Dorsolateral prefrontal cortex (tissue), 120 donors: ENCODE measurements at regions of chr1 and their contacts with region 1.

Region 1: GRCh38 chr1:150186789-150187559 is 37.3 kb downstream of the PLEKHO1 start:
- DNase-seq: no peak
- H3K4me3 ChIP-seq: peak overlapping the region in 35 of 59 donors; percentile 0 to 50 (median 20)
- H3K27ac ChIP-seq: peak overlapping the region in 32 of 59 donors; percentile 5 to 85 (median 50)
- H3K27me3 ChIP-seq: peaks cover 0 to 17% (median 0%) of the 10 kb centered on the region in 45 donors
- CTCF ChIP-seq: peak; percentile 39 to 78 (median 65)

Region 2: GRCh38 chr1:149962123-149962548 is 224.8 kb before region 1 on chr1:
- intact Hi-C with region 1: loop called (anchors 10 kb)
- DNase-seq: peak in 4 of 10 donors; percentile 52 to 70 (median 62)
- H3K4me3 ChIP-seq: peak overlapping the region in 2 of 59 donors; percentile 2 to 11
- H3K27ac ChIP-seq: peak overlapping the region in 56 of 59 donors; percentile 24 to 91 (median 78)
- H3K27me3 ChIP-seq: no peaks in the 10 kb centered on the region
- CTCF ChIP-seq: peak; percentile 80 to 97 (median 88)

Region 3: GRCh38 chr1:150053926-150054325 is 133.0 kb before region 1 on chr1:
- intact Hi-C with region 1: no loop called
- DNase-seq: no peak
- H3K4me3 ChIP-seq: no peak overlapping the region
- H3K27ac ChIP-seq: no peak overlapping the region
- H3K27me3 ChIP-seq: no peaks in the 10 kb centered on the region
- CTCF ChIP-seq: no peak

Region 4: GRCh38 chr1:150067184-150068036 is 119.6 kb before region 1 on chr1 and contains the start of gene VPS45:
- intact Hi-C with region 1: loop called (anchors 5 to 10 kb)
- DNase-seq: peak; percentile 77 to 96 (median 92)
- H3K4me3 ChIP-seq: peak within 1 kb of the TSS; percentile 59 to 97 (median 83)
- H3K27ac ChIP-seq: peak within 1 kb of the TSS; percentile 86 to 100 (median 97)
- H3K27me3 ChIP-seq: no peaks in the 10 kb centered on the region
- CTCF ChIP-seq: peak in 26 of 56 donors; percentile 6 to 58 (median 32)
- total RNA-seq, gene VPS45: 50.9 to 95.6 (median 71.3) TPM

Region 5: DNA sequence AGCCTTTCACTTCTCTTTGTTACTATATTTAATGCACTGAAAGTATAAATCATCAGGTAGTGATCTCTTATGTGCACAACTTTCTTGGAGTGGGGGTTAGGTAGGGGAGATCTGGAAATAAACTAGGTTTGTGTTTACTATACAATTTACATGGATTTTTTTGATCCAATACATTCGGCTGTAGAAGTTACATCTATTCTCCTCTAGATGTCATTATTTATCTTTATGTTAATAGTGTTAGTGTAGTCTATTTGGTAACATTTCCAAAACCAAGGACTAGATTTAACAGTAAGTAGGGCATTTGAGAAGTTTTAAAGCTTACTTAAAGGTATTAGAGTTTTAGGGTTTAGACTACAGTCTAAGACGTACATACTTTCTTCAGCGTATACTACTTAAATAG is 114.0 kb before region 1 on chr1:
- intact Hi-C with region 1: loop called (anchors 5 to 10 kb)
- DNase-seq: no peak
- H3K4me3 ChIP-seq: no peak overlapping the region
- H3K27ac ChIP-seq: peak overlapping the region in 1 of 59 donors; percentile 1
- H3K27me3 ChIP-seq: no peaks in the 10 kb centered on the region
- CTCF ChIP-seq: peak in 55 of 56 donors; percentile 27 to 77 (median 55)